SK-N-SH (cell line): ENCODE measurements at regions of chr14 and their contacts with region 1.

Region 1: DNA sequence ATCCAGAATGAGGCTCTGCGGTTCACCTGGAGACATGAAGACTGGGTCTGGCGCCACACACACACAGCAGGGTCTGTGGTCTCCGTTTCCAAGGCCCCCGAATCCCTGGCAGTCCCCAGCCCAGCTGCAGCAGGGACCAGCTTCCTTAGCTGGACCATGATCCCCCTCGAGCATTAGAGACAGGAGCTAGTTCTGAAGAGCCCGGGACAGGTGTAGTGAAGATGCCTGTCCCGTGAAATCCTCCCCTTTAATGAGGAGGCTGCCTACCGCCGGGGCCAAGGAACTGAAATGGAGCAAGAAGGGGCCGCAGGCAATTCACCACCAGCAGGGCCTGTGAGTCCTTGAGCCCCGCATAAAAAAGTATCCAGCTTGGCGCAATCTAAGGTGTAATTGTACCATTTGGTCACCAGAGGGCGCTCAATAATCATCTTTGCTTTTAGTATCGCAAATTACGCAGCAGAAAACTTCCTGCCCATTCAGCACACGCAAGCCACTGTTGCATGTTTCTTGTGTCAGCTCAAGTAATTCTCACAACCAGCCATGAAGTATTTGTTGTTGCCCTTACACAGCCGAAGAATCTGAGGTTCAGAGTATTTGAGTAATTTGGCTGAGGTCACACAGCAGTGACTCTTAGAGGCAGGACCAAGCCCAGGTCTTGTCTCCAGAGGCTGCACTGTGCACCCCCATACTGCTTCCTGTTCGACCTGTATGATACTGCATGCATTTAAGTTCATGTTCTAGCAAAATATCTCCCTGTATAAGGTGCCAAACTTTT is 54.3 kb upstream of the PPP2R5C start:
- DNase-seq: peak; percentile 83
- H3K4me3 ChIP-seq: peak overlapping the region in 1 of 2 experiments; percentile 16; a peak in 1 of 4 replicates
- H3K27ac ChIP-seq: no peak overlapping the region
- H3K4me1 ChIP-seq: peaks cover 0 to 9% of the 10 kb centered on the region in 2 experiments; a peak in 1 of 4 replicates
- H3K27me3 ChIP-seq: no peaks in the 10 kb centered on the region
- CTCF ChIP-seq: peak; percentile 80
- EP300 ChIP-seq: no peak
- RAD21 ChIP-seq: peak; percentile 95

Region 2: DNA sequence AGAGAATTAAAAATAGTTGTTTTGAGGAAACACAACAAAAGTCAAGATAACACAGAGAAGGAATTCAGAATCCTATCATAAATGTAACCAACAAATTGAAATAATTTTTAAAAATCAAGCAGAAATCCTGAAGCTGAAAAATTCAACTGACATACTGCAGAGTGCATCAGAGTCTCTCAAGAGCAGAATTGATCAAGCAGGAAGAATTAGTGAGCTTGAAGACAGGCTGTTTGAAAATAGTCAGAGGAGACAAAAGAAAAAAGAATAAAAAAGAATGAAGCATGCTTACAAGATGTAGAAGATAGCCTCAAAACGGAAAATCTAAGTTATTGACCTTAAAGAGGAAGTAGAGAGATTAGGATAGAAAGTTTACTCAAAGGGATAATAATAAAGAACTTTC is 11.6 kb before region 1 on chr14:
- CTCF ChIA-PET with region 1: interaction called, 14 read pairs
- POLR2A ChIA-PET with region 1: no interaction called
- DNase-seq: no peak
- H3K4me3 ChIP-seq: no peak overlapping the region
- H3K27ac ChIP-seq: no peak overlapping the region
- H3K4me1 ChIP-seq: no peaks in the 10 kb centered on the region
- H3K27me3 ChIP-seq: no peaks in the 10 kb centered on the region
- CTCF ChIP-seq: no peak
- EP300 ChIP-seq: no peak
- RAD21 ChIP-seq: no peak

Region 3: GRCh38 chr14:101721951-101722661 is 14.9 kb after region 1 on chr14:
- CTCF ChIA-PET with region 1: interaction called, 44 read pairs
- POLR2A ChIA-PET with region 1: no interaction called
- DNase-seq: no peak
- H3K4me3 ChIP-seq: no peak overlapping the region
- H3K27ac ChIP-seq: peak overlapping the region in 1 of 2 experiments; percentile 92; a peak in 2 of 4 replicates
- H3K4me1 ChIP-seq: peaks cover 0 to 2% of the 10 kb centered on the region in 2 experiments; a peak in 1 of 4 replicates
- H3K27me3 ChIP-seq: no peaks in the 10 kb centered on the region
- CTCF ChIP-seq: no peak
- EP300 ChIP-seq: 0 out of 4 replicates have a peak, but pooled peaks of 1 of the 2 experiments have one; percentile 23
- RAD21 ChIP-seq: no peak